ENCODE measurements at regions of chr2 and their contacts with region 1.

Region 1: DNA sequence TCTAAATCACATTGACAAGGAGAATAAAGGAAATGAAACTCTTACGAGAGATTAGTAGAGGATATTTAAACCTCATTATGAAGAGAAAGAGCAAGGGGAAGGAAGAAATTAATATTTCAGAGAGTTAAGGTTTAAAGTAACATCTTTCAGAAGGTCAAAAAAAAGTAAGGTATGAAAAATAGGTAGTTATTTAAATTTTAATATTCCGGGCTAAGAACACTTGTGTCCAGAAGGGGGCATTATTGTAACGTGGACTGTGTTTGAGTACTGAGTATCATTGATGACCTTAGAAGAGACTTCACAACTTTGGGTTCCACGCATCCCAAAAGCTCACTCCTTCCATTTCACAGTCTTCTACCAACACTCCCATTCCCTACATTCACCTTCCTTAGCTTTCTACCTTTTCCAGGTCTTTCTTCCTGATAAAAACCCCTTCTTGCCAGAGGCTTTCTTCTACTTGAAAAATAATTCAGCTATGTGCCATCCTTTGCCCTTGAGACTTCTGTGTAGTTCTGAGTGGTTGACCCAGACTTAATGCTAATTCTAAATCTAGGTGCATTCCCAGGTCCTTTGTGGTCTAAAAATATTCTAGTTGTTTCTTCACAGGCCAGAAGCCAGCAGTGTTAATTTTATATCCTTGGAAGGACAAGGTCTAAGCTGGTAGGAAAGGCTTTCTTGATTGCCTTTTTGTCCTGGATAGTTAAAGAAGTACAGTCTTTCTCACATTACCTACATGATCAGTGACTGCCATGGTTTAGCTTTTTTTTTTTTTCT is 16.5 kb downstream of the DYNC1I2 start:
- DNase-seq: no peak
- ATAC-seq: peak; percentile 37

Region 2: DNA sequence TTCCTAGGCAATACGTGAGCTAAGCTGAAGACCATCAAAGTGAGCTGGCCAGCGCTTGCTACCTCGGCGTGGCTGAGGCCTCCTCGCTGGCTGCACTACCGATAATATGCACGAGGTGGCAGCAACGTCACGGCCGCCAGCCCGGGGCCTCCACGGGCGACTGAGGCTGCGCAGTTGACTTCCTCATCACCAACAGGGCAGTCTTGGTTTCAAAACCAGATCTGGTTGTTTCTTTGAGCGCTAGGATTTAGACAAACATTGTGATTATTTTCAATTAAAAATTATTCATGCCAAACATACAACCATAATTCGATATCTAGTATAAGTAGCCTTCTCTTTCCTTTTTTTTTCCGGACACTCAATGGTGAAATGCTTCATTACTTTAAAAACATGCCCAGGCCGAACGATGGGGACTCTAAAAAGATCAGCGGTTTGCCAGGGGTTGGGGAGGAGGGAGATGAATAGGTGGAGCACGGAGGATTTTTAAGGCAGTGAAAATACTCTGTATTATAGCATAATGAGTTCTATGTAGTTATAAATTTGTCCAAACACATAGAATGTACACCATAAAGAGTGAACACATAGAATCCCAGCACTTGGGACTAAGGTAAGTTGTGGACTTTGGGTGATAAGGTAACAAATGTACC is 129.5 kb before region 1 on chr2:
- intact Hi-C with region 1: loop called (anchors 10 kb)
- DNase-seq: peak; percentile 94
- ATAC-seq: peak; percentile 91

Region 3: GRCh38 chr2:171778515-171778914 is 74.8 kb after region 1 on chr2:
- intact Hi-C with region 1: no loop called
- DNase-seq: no peak
- ATAC-seq: no peak

Measured in Right ventricle myocardium inferior (tissue), 1 donor.